Kidney (tissue), 22 donors: ENCODE measurements at regions of chr12 and their contacts with region 1.

Region 1: DNA sequence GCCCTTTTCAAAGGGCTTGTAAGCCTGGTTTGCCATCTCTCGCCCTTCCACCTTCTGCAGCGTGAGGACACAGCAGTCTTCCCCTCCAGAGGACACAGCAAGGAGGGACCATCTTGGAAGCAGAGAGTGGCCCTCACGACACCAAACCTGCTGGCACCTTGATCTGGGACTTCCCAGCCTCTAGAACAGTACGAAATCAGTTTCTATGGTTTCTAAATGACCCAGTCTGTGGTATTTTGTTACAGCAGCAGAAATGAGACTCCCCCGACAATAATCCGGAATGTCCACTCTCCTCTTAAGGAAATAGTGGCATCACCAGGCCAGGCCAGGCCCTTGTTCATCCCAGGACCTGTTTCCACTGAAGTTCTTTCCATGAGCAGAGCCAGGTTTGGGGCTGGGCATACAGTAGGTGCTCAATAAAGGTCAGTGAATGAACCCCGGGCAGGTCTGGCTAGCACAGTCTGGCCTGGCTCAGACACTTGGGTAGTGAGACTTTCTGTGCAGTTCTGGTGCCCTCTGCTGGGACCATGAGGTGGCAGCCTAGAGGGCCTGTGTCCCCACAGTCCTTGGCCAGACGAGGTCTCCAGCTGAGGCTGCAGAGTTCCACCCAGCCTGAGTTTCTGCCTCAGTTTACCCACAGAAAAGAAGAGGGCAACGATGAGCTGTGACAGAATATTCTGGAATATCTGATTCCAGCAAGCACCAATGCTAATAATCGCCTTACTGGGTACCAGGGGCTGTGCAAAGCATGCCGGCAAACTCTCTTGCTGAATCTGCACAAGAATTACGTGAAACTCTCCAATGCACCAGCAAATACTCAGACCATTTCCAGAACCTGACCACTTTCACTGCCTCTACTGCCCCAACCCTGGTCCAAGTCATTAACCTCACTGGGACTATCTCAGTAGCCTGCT is 14.0 kb downstream of the ABCB9 start:
- DNase-seq: peak; percentile 67 to 88 (median 75)
- H3K4me3 ChIP-seq: no peak overlapping the region
- H3K27ac ChIP-seq: no peak overlapping the region
- H3K4me1 ChIP-seq: peaks cover 0 to 4% (median 0%) of the 10 kb centered on the region in 3 donors
- H3K27me3 ChIP-seq: no peaks in the 10 kb centered on the region
- CTCF ChIP-seq: peak; percentile 85

Region 2: GRCh38 chr12:122793685-122794106 is 158.5 kb before region 1 on chr12:
- intact Hi-C with region 1: loop called (anchors 10 kb)
- DNase-seq: peak in 2 of 5 donors; percentile 55 to 68
- H3K4me3 ChIP-seq: peak overlapping the region in 1 of 3 donors; percentile 23
- H3K27ac ChIP-seq: no peak overlapping the region
- H3K4me1 ChIP-seq: peaks cover 0 to 4% (median 0%) of the 10 kb centered on the region in 3 donors
- H3K27me3 ChIP-seq: no peaks in the 10 kb centered on the region
- CTCF ChIP-seq: peak; percentile 65

Region 3: GRCh38 chr12:122860346-122861090 is 91.7 kb before region 1 on chr12:
- intact Hi-C with region 1: loop called (anchors 5 kb)
- DNase-seq: peak; percentile 84 to 95 (median 90)
- H3K4me3 ChIP-seq: no peak overlapping the region
- H3K27ac ChIP-seq: peak overlapping the region in 1 of 2 donors; percentile 51
- H3K4me1 ChIP-seq: peaks cover 0 to 32% (median 26%) of the 10 kb centered on the region in 3 donors
- H3K27me3 ChIP-seq: no peaks in the 10 kb centered on the region
- CTCF ChIP-seq: peak; percentile 96

Region 4: GRCh38 chr12:122917504-122918121 is 34.6 kb before region 1 on chr12:
- intact Hi-C with region 1: no loop called
- DNase-seq: peak in 1 of 5 donors; percentile 80
- H3K4me3 ChIP-seq: no peak overlapping the region
- H3K27ac ChIP-seq: no peak overlapping the region
- H3K4me1 ChIP-seq: peaks cover 0 to 10% (median 0%) of the 10 kb centered on the region in 3 donors
- H3K27me3 ChIP-seq: no peaks in the 10 kb centered on the region
- CTCF ChIP-seq: no peak